ENCODE measurements at regions of chr7 and their contacts with region 1.

Region 1: GRCh38 chr7:33932832-33933468 is 27.6 kb downstream of the BMPER start:
- DNase-seq: peak; percentile 83
- ATAC-seq: peak; percentile 90

Region 2: GRCh38 chr7:33243319-33243881 is 689.5 kb before region 1 on chr7:
- intact Hi-C with region 1: loop called (anchors 10 kb)
- DNase-seq: no peak
- ATAC-seq: peak; percentile 53

Region 3: DNA sequence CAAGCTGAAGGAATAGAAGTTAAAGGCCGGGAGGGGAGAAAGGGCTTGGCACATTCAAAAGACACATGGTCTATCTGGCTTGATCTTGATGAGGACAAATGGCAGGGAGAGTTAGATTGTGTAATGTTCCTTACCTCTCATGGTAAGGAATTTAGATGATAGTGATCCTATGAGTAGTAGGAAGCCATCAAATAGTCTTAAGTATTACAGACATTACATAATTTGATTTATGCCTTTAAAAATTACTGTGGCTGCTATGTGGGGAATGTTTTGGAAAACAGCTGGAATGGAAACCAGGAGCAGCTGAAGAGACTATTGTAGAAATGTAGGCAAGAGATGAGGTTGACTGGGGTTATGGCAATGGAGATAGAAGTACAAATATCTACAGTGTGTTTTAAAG is 378.9 kb before region 1 on chr7:
- intact Hi-C with region 1: no loop called
- DNase-seq: no peak
- ATAC-seq: no peak

Region 4: GRCh38 chr7:33986941-33987588 is 54.1 kb after region 1 on chr7:
- intact Hi-C with region 1: no loop called
- DNase-seq: no peak
- ATAC-seq: peak; percentile 62

Region 5: DNA sequence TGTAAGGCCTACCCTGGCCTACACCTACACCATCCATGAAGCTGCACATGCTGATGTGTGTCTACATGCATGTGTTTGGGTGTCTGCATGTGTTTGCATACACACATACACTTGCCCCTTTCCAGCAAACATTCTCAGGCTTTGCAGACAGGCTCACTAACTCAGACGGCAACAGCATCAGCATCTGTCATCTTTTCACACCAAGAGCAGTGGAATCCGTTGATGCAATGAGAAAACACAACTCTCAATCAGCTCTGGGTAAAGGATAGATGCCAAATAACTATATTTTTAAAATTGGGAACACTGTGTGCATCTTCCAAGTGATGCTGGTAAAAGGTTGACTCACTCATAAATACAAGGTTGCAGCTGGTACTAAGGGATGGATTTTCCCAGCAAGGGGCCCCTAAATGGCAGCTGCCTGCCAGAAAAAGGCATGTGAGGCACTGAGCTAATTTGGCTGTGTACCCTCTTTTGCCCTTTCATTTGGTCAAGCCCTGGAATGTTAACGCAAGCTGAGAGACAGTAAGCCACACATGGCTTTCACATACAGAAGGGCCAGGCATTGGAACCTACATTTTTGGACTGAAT is 428.8 kb after region 1 on chr7:
- intact Hi-C with region 1: no loop called
- DNase-seq: no peak
- ATAC-seq: no peak

Measured in Right ventricle myocardium superior (tissue), 1 donor.